ENCODE measurements at regions of chr7 and their contacts with region 1.

Region 1: GRCh38 chr7:816300-816750 is 16.0 kb upstream of the SUN1 start:
- DNase-seq: peak; percentile 98
- H3K4me3 ChIP-seq: peak overlapping the region; percentile 94 to 97
- H3K27ac ChIP-seq: peak overlapping the region; percentile 79 to 86
- H3K4me1 ChIP-seq: peaks cover 4% of the 10 kb centered on the region
- H3K27me3 ChIP-seq: no peaks in the 10 kb centered on the region
- CTCF ChIP-seq: no peak
- POLR2A ChIP-seq: peak; percentile 91

Region 2: GRCh38 chr7:220151-220841 is 596.0 kb before region 1 on chr7:
- intact Hi-C with region 1: no loop called
- DNase-seq: no peak
- H3K4me3 ChIP-seq: no peak overlapping the region
- H3K27ac ChIP-seq: peak overlapping the region; percentile 19 to 63
- H3K4me1 ChIP-seq: peaks cover 11% of the 10 kb centered on the region
- H3K27me3 ChIP-seq: no peaks in the 10 kb centered on the region
- CTCF ChIP-seq: peak in 1 of 4 experiments; percentile 9
- POLR2A ChIP-seq: no peak

Region 3: DNA sequence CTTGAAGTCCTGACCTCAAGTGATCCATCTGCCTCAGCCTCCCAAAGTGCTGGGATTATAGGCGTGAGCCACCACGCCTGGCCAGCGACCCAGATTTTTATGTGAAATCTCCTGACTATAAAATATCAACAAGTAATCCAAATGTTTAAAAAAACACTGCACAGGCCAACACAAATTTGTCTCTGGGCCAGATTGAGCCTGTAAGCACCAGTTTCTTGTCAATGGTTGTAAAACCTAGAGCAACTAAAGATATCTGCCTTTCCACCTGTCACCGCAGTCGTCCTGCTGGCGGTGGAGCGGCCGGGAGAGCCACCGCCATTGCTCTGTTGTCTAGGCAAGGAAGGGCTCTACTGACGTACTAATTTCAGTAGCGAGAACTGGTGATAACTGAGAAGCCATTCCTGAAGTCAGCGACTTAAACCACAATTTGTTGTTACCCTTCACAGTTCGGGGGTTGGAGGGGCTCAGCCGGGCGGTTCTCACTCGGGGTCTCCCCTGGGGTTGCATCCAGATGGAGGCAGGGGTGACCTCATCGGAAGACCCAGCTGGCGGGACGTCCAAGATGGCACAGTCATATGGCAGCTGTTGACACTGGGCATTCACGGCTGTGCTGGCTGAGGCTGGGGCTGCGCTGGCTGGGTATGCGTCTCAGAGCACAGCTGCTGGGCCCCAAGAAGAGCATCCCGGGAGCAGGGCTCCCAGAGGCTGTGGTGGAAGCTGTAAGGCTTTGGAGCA is 241.5 kb before region 1 on chr7:
- intact Hi-C with region 1: no loop called
- DNase-seq: peak; percentile 54
- H3K4me3 ChIP-seq: no peak overlapping the region
- H3K27ac ChIP-seq: peak overlapping the region in 1 of 2 donors; percentile 26
- H3K4me1 ChIP-seq: no peaks in the 10 kb centered on the region
- H3K27me3 ChIP-seq: no peaks in the 10 kb centered on the region
- CTCF ChIP-seq: peak in 1 of 4 experiments; percentile 36
- POLR2A ChIP-seq: no peak

Region 4: DNA sequence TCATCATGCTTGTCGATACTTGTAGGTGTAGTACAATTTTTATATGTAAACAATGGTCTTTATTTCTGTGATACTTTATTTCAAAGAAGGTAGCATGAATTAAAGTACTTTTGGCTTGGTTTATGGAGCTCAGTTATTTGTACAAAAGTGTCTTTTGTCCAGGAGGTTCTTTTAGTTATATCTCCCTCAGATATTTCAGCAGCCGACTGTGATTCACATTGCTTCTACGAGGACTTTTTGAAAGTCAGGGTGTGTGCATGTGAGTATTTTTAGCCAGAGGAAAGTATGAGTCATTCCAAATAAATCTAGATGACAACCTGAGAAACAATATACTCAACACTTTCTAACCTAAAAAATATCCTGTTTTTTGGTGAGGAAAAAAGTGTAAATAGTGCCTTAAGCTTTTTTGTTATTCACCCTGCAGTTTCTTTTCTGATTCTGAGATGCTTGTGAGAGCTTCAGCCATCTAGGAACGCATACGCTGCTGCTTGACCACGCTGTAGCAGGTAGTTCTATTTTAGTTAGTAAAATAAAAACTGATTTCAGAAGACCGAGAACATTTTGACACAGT is 15.4 kb after region 1 on chr7:
- intact Hi-C with region 1: loop called (anchors 1 kb)
- DNase-seq: no peak
- H3K4me3 ChIP-seq: no peak overlapping the region
- H3K27ac ChIP-seq: peak overlapping the region; percentile 75 to 78
- H3K4me1 ChIP-seq: peaks cover 13% of the 10 kb centered on the region
- H3K27me3 ChIP-seq: no peaks in the 10 kb centered on the region
- CTCF ChIP-seq: no peak
- POLR2A ChIP-seq: peak; percentile 32

Region 5: GRCh38 chr7:909358-910329 is 93.3 kb after region 1 on chr7:
- intact Hi-C with region 1: no loop called
- DNase-seq: no peak
- H3K4me3 ChIP-seq: peak overlapping the region in 1 of 2 donors; percentile 26
- H3K27ac ChIP-seq: no peak overlapping the region
- H3K4me1 ChIP-seq: no peaks in the 10 kb centered on the region
- H3K27me3 ChIP-seq: no peaks in the 10 kb centered on the region
- CTCF ChIP-seq: no peak
- POLR2A ChIP-seq: no peak

Measured in prostate gland (tissue), 2 donors.